Mucosa of descending colon (tissue), 3 donors: ENCODE measurements at regions of chr5 and their contacts with region 1.

Region 1: DNA sequence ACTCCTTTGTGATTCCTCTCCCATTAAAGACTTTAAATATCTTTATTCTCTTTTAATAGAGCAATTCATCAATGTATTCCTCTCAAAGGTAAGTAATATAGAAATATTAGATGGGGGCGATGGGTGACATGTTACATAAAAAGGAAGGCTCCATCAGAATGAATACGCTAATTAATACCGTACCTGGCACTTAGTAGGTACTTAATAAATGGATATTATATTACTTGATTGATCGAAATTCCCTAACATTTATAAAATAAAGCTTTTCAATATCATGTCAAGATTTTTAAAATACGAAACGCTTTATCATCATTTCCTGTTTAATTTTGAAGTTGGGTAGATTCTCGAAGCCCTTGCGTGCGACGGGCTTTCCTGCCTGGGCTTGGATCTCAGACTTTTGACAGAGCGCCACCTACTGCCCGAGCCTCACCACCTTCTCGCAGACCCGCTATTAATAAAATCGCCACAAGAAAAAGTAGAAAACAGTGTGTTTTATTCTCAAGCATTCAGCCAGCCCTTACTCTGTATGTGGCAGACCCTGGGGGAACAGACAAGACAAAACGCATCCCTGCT is 99.4 kb downstream of the C5orf15 start:
- DNase-seq: peak in 2 of 3 donors; percentile 72 to 87
- ATAC-seq: peak; percentile 70
- H3K4me3 ChIP-seq: no peak overlapping the region
- H3K4me1 ChIP-seq: no peaks in the 10 kb centered on the region
- CTCF ChIP-seq: peak; percentile 58

Region 2: GRCh38 chr5:133423618-133424282 is 445.3 kb before region 1 on chr5:
- intact Hi-C with region 1: loop called in 1 of 2 experiments (anchors 10 kb)
- DNase-seq: peak in 2 of 3 donors; percentile 73 to 77
- ATAC-seq: peak; percentile 91
- H3K4me3 ChIP-seq: no peak overlapping the region
- H3K4me1 ChIP-seq: no peaks in the 10 kb centered on the region
- CTCF ChIP-seq: peak; percentile 93

Region 3: GRCh38 chr5:133727636-133728035 is 141.4 kb before region 1 on chr5:
- intact Hi-C with region 1: no loop called
- DNase-seq: no peak
- ATAC-seq: no peak
- H3K4me3 ChIP-seq: no peak overlapping the region
- H3K4me1 ChIP-seq: no peaks in the 10 kb centered on the region
- CTCF ChIP-seq: no peak

Region 4: DNA sequence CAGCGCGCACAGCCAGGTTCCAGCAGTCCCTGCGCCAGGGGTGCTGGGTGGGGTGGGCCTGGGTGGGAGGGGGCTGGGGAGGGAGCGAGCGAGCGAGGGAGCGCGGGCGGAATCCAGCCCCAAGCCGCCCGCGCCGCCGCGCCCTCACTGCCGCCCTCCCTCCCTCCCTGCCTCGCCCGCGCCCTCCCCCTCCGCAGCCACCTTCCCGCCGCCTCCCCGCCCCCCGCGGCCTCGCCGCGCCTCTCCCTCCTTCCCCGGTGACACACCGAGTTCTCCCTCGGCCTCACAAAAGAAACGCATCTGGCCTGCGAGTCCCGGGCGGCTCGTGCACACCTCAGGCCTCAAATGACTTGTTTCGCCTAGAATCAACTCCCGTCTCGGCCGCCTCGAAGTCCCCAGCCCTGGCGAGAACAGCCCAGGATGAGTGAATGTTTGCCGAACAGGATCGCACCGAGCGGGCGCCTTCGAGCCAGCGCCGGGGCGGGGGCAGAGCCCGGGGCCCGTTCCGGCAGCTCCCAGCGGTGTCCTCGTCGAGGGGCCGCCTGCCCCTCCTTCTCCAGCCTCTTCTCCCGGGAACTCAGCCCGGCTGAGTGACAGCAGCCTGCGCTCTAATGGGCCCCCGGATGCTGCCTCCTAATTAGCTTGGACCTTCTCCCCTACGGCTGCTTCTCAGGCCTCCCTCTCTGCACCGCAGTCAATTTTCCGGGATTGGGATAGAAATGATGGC is 1165.4 kb after region 1 on chr5:
- intact Hi-C with region 1: no loop called
- DNase-seq: peak; percentile 66 to 80 (median 75)
- ATAC-seq: peak; percentile 69
- H3K4me3 ChIP-seq: no peak overlapping the region
- H3K4me1 ChIP-seq: peaks cover 28% of the 10 kb centered on the region
- CTCF ChIP-seq: no peak